ENCODE measurements at regions of chr1 and their contacts with region 1.

Region 1: DNA sequence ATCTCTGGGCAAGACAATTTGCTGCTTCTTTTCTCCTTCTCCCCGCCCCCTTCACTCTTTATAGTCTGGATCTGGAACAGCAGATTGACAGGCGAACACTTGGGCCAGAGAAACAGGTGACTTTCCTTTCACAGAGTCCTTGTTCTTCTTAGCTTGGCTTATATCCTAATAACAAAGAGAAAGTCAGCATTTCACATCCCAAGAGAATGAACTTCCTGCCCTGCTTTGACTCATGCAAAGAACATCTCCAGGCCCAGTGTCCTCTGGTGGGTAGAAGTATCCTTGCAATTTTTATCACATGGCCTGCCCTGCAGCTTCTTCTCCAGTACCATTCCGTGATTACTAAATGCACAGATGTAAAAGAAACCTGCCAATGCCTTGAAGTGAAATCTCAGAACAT is 764.4 kb downstream of the ADGRL2 start:
- DNase-seq: no peak
- ATAC-seq: peak; percentile 68
- H3K4me3 ChIP-seq: no peak overlapping the region
- H3K27ac ChIP-seq: no peak overlapping the region
- H3K4me1 ChIP-seq: no peaks in the 10 kb centered on the region
- H3K27me3 ChIP-seq: no peaks in the 10 kb centered on the region
- CTCF ChIP-seq: no peak; the same call in 1 of the 2 replicates

Region 2: GRCh38 chr1:81706650-81707435 is 858.3 kb before region 1 on chr1:
- CTCF ChIA-PET with region 1: no interaction called
- POLR2A ChIA-PET with region 1: no interaction called
- in situ Hi-C with region 1: no loop called
- intact Hi-C with region 1: no loop called
- DNase-seq: no peak
- ATAC-seq: no peak
- H3K4me3 ChIP-seq: no peak overlapping the region
- H3K27ac ChIP-seq: no peak overlapping the region
- H3K4me1 ChIP-seq: no peaks in the 10 kb centered on the region
- H3K27me3 ChIP-seq: no peaks in the 10 kb centered on the region
- CTCF ChIP-seq: no peak

Region 3: DNA sequence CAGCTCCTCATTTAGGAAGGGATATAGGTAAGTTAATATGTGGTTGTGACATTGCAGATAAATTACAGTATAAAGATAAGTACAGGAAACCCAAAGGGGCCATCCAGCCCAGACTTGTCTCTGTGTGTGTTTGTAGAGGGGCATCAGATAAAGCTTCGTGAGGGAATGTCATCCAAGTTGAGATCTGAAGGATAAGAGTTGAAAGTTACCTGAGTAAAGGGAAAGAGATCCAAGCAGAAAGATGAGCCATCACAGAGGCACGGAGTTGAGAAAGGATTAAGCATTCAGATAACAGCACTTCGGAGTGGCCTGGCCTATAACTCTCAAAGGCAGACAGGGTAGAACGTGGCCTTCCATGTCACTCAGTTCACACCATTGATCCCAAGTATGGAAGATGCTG is 15.3 kb before region 1 on chr1:
- CTCF ChIA-PET with region 1: no interaction called
- POLR2A ChIA-PET with region 1: no interaction called
- in situ Hi-C with region 1: no loop called
- intact Hi-C with region 1: loop called (anchors 2 kb)
- DNase-seq: no peak
- ATAC-seq: no peak
- H3K4me3 ChIP-seq: no peak overlapping the region
- H3K27ac ChIP-seq: no peak overlapping the region
- H3K4me1 ChIP-seq: no peaks in the 10 kb centered on the region
- H3K27me3 ChIP-seq: no peaks in the 10 kb centered on the region
- CTCF ChIP-seq: no peak

Region 4: GRCh38 chr1:82625537-82625936 is 60.4 kb after region 1 on chr1:
- CTCF ChIA-PET with region 1: no interaction called
- POLR2A ChIA-PET with region 1: no interaction called
- in situ Hi-C with region 1: no loop called
- intact Hi-C with region 1: no loop called
- DNase-seq: no peak
- ATAC-seq: no peak
- H3K4me3 ChIP-seq: no peak overlapping the region
- H3K27ac ChIP-seq: no peak overlapping the region
- H3K4me1 ChIP-seq: no peaks in the 10 kb centered on the region
- H3K27me3 ChIP-seq: no peaks in the 10 kb centered on the region
- CTCF ChIP-seq: no peak

Region 5: DNA sequence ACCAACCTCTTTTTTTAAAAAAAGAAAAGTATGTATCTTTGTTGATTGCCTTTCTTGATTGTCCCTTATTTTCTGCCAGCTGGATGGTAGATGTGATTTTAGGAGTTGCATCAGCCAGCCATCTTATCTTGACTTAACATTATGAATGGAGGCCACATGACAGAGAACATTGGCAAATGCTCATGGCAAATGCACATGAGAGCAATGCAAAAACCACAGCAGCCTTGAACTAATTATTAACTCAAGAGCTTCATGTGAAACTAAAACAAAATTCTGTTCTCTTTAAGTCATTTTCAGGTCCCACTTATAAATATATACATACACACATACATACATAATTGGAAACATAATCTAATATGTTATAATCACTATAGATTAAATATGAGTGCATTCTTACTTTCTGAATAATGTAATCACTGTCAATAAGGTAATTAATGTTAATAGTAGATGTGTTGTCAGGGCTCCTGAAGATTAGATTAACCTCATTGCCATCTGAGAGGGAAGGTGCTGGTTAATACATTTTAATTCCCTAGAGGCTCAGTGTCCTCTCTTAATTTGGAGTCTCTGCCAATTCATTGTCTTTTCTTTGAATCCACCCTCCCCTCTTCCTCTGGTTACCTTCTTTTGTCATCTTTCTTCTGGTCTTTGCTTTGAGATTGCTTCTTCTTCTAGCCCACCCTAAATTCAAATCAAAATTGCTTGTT is 197.8 kb after region 1 on chr1:
- CTCF ChIA-PET with region 1: no interaction called
- POLR2A ChIA-PET with region 1: no interaction called
- in situ Hi-C with region 1: no loop called
- intact Hi-C with region 1: no loop called
- DNase-seq: no peak
- ATAC-seq: no peak
- H3K4me3 ChIP-seq: no peak overlapping the region
- H3K27ac ChIP-seq: no peak overlapping the region
- H3K4me1 ChIP-seq: no peaks in the 10 kb centered on the region
- H3K27me3 ChIP-seq: no peaks in the 10 kb centered on the region
- CTCF ChIP-seq: no peak

Measured in Panc1 (cell line).